ENCODE measurements at regions of chr3 and their contacts with region 1.

Region 1: DNA sequence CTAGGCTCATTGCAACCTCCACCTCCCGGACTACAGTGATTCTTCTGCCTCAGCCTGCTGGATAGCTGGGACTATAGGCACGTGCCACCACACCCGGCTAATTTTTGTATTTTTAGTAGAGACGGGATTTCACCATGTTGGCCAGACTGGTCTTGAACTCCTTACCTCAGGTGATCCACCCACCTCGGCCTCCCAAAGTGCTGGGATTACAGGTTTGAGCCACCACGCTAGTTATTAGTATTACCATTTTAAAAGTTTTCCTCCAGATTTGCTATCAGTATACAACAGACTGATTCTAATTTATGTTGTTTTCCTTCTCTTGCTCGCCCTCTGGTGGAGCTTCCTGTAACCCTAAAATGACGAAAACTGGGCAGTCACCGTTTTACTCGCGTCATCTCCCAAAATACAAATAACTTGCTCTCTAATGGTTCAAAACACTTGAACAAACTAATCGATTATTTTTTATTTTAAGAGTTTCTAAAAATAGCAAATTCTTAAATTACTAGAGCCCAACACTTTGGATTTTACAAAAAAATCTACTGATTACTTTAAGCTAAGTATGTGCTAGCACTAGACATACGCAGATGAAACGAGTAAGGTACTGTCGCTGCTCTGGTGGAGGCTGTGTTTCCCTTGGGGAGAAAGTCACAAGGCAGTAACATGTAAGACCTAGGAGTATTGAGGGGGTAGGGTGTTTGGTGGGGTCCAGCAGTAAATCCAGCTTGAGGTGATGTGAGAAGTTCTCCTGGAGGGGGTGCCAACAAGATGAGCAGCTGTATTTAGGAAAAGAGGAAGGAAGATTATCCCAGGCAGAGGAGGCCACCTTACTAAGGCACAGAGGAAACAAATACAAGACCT is 203.3 kb downstream of the MBNL1 start:
- DNase-seq: peak; percentile 81
- ATAC-seq: peak; percentile 74
- H3K4me3 Mint-ChIP-seq: no peak overlapping the region
- H3K27ac Mint-ChIP-seq: peak overlapping the region; percentile 22
- H3K4me1 Mint-ChIP-seq: peaks cover 2% of the 10 kb centered on the region
- H3K27me3 Mint-ChIP-seq: peaks cover 13% of the 10 kb centered on the region

Region 2: GRCh38 chr3:152071924-152072323 is 400.1 kb before region 1 on chr3:
- CTCF ChIA-PET with region 1: interaction called, 17 read pairs
- POLR2A ChIA-PET with region 1: no interaction called
- DNase-seq: peak; percentile 28
- ATAC-seq: peak; percentile 67
- H3K4me3 Mint-ChIP-seq: no peak overlapping the region
- H3K27ac Mint-ChIP-seq: no peak overlapping the region
- H3K4me1 Mint-ChIP-seq: no peaks in the 10 kb centered on the region
- H3K27me3 Mint-ChIP-seq: no peaks in the 10 kb centered on the region

Region 3: GRCh38 chr3:152084441-152085158 is 387.4 kb before region 1 on chr3:
- CTCF ChIA-PET with region 1: no interaction called
- POLR2A ChIA-PET with region 1: no interaction called
- DNase-seq: no peak
- ATAC-seq: no peak
- H3K4me3 Mint-ChIP-seq: no peak overlapping the region
- H3K27ac Mint-ChIP-seq: no peak overlapping the region
- H3K4me1 Mint-ChIP-seq: no peaks in the 10 kb centered on the region
- H3K27me3 Mint-ChIP-seq: no peaks in the 10 kb centered on the region

Region 4: DNA sequence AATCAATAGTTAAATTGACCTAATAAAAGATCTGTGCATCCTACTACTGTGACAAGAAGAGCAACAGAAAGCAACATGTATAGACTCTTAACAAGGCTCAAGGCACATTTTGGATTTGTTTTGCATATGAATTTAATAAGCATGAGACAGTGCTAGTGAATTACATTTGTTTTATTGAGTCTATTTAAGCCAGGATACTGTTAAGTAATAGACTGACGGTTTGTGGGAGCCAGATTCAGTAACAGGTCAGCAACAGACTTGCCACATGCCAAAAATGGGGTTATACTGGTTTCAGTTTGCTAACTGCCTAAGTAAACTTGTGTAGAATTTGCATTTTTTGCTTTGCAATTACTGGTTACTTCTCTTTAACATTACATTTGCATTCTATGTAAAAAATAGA is 149.3 kb before region 1 on chr3:
- CTCF ChIA-PET with region 1: no interaction called
- POLR2A ChIA-PET with region 1: no interaction called
- DNase-seq: no peak
- ATAC-seq: peak; percentile 13
- H3K4me3 Mint-ChIP-seq: peak overlapping the region; percentile 19
- H3K27ac Mint-ChIP-seq: peak overlapping the region; percentile 14
- H3K4me1 Mint-ChIP-seq: peaks cover 70% of the 10 kb centered on the region
- H3K27me3 Mint-ChIP-seq: no peaks in the 10 kb centered on the region

Region 5: DNA sequence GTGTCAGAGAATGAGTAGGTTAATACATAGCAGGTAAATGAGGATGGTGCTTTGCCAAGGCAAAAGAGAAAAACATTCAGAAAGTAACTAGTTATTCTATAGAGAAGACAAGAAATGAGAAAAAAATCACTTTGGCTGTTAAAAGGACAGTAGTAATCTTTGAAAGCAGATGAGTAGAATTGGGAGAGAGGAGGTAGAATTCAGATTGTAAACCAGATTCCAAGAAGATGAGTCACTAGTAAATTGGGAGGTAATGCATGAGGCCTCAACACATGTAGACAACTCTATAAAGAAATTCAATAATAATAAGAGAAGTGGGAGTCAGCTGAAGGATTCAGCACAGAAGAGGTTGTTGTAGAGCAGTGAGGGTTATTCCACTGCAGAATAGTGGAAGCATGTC is 121.9 kb before region 1 on chr3:
- CTCF ChIA-PET with region 1: no interaction called
- POLR2A ChIA-PET with region 1: no interaction called
- DNase-seq: no peak
- ATAC-seq: no peak
- H3K4me3 Mint-ChIP-seq: no peak overlapping the region
- H3K27ac Mint-ChIP-seq: no peak overlapping the region
- H3K4me1 Mint-ChIP-seq: peaks cover 34% of the 10 kb centered on the region
- H3K27me3 Mint-ChIP-seq: no peaks in the 10 kb centered on the region

Region 6: DNA sequence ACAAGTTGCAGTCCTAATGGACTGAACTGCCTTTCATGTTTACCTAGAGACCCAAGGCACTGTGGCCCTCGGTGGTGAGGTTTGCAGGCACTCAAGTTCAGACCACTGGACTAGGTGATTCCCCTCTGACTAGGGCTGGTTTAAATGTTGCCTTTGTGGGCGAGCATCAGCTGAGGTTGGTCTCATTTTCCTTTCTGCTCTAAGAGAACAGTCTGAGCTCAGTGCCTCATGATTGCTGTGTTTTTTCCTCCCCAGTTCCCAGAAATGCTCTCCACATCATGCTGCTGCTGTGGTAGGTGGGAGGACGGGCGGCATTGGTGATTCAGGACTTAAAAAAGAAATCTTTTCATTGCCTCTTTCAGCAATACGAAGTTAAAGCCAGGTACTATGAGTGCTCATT is 33.9 kb after region 1 on chr3:
- CTCF ChIA-PET with region 1: interaction called, 10 read pairs
- POLR2A ChIA-PET with region 1: no interaction called
- DNase-seq: peak; percentile 58
- ATAC-seq: peak; percentile 86
- H3K4me3 Mint-ChIP-seq: no peak overlapping the region
- H3K27ac Mint-ChIP-seq: peak overlapping the region; percentile 41
- H3K4me1 Mint-ChIP-seq: peaks cover 18% of the 10 kb centered on the region
- H3K27me3 Mint-ChIP-seq: peaks cover 5% of the 10 kb centered on the region

Region 7: DNA sequence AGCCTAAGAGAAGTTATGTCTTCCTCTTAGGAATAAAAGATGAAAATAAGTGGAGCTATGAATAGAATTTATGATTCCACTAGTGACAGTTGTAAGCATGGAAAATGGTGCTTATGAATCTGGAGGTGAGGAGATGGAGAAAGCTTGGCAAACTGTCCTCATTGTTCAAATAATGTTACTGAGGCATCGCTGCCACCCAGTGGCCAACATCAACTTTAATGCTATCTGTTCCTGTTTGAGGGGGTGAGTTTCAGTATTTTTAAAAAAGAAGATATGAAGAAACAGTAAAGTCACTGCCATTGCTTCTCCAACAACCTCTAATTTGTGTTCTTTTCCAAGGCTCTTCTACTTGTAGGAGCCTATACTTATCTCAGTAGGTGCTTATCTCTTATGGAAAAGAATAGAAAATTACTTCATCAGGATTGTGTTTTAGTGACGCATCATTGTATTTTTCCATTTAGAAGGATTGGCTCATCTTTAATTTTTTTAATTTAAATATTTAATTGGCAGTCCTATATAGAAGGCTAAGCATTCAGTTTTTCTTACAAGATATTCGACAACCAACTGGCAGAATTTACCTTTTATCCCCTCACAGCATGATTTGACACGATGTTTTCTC is 102.5 kb after region 1 on chr3:
- CTCF ChIA-PET with region 1: interaction called, 10 read pairs
- POLR2A ChIA-PET with region 1: no interaction called
- DNase-seq: peak; percentile 51
- ATAC-seq: no peak
- H3K4me3 Mint-ChIP-seq: no peak overlapping the region
- H3K27ac Mint-ChIP-seq: no peak overlapping the region
- H3K4me1 Mint-ChIP-seq: no peaks in the 10 kb centered on the region
- H3K27me3 Mint-ChIP-seq: peaks cover 22% of the 10 kb centered on the region